ENCODE measurements at regions of chr3 and their contacts with region 1.

Region 1: GRCh38 chr3:36792342-36792741 is 28.0 kb upstream of the DCLK3 start:
- DNase-seq: peak; percentile 51
- H3K4me3 ChIP-seq: no peak overlapping the region
- H3K27ac ChIP-seq: no peak overlapping the region
- H3K4me1 ChIP-seq: no peaks in the 10 kb centered on the region
- CTCF ChIP-seq: peak; percentile 66

Region 2: DNA sequence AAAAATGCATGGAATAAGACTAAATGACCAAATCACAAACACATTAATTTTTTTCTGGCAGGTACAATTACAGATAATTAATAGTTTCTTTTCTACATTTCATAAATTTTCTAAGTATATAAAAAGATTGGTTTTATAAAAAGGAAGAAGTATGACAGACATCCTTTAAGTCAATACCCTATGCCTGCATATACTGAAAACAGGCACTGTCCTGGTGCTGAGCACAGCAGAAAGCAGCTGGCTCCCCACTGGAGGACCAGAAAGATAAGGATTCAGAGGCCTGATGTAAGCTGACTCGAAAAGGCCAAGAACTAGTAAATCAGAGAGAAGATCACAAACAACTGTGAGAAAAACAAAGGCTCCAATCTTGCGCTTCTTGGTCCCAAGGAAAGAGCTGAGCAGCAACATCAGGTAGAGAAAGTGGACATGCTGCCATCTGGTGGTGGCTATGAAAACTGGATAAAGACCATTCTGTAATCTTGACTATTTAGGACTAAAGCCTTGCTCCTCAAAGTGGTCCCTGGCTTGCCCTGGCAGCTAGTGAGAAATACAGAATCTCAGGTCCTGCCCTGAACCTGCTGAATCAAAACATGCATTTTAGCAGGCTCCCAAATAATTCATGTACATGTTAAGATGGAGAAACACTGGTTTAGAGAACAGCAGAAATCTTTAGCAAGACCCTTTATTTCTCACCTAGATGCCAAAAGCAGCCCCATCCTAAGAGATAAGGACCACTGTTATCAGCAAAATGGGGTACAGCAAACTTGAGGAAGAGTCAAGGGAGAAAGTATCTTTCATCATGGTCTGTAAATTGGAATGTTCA is 76.5 kb after region 1 on chr3:
- CTCF ChIA-PET with region 1: interaction called, 3 read pairs
- POLR2A ChIA-PET with region 1: no interaction called
- intact Hi-C with region 1: loop called (anchors 5 kb)
- DNase-seq: peak; percentile 67
- H3K4me3 ChIP-seq: no peak overlapping the region
- H3K27ac ChIP-seq: no peak overlapping the region
- H3K4me1 ChIP-seq: peaks cover 2% of the 10 kb centered on the region
- CTCF ChIP-seq: peak; percentile 93

Region 3: GRCh38 chr3:37689645-37690356 is 897.5 kb after region 1 on chr3:
- CTCF ChIA-PET with region 1: no interaction called
- POLR2A ChIA-PET with region 1: no interaction called
- intact Hi-C with region 1: no loop called
- DNase-seq: no peak
- H3K4me3 ChIP-seq: no peak overlapping the region
- H3K27ac ChIP-seq: no peak overlapping the region
- H3K4me1 ChIP-seq: no peaks in the 10 kb centered on the region
- CTCF ChIP-seq: no peak

Measured in OCI-LY7 (cell line).